ENCODE measurements at regions of chr19 and their contacts with region 1.

Region 1: DNA sequence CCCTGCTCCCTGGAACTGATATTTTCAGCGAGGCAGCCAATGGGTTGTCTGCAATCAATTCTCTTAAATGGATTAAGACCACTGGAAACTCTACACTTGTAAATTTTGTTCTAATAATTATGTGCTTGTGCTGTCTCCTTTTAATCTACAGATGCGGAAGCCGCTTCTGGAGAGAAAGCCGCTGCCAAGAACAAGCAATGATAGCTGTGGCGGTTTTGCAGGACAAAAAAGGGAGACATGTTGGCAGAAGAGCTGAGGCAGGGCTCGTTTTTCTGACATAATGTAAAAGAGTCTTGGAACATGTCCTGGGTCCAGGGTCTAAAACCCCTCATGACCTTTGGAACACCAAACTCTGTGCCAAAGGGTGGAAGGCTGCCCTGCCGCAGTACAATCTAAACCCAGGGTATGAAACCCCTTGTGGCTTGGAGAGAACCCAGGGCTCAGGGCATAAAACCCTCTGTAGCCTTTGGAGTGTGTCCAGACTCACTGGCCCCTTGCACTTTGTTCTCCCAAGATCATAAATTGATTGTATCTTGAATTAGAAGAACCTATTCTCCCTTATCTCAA is 12.7 kb downstream of the ZNF417 start:
- DNase-seq: no peak
- ATAC-seq: peak; percentile 35; the same call in 1 of the 3 replicates
- H3K4me3 ChIP-seq: no peak overlapping the region
- H3K27ac ChIP-seq: no peak overlapping the region
- H3K4me1 ChIP-seq: peaks cover 12% of the 10 kb centered on the region
- H3K27me3 ChIP-seq: no peaks in the 10 kb centered on the region
- CTCF ChIP-seq: no peak
- EP300 ChIP-seq: no peak
- POLR2A ChIP-seq: no peak
- RAD21 ChIP-seq: no peak

Region 2: GRCh38 chr19:57465495-57466395 is 438.0 kb before region 1 on chr19:
- CTCF ChIA-PET with region 1: no interaction called
- POLR2A ChIA-PET with region 1: no interaction called
- in situ Hi-C with region 1: no loop called
- intact Hi-C with region 1: loop called (anchors 5 kb)
- DNase-seq: peak; percentile 57
- ATAC-seq: peak; percentile 96
- H3K4me3 ChIP-seq: no peak overlapping the region
- H3K27ac ChIP-seq: no peak overlapping the region
- H3K4me1 ChIP-seq: no peaks in the 10 kb centered on the region
- H3K27me3 ChIP-seq: no peaks in the 10 kb centered on the region
- CTCF ChIP-seq: peak; percentile 83
- EP300 ChIP-seq: no peak
- POLR2A ChIP-seq: no peak
- RAD21 ChIP-seq: peak; percentile 74

Region 3: GRCh38 chr19:57888560-57889231 is 15.0 kb before region 1 on chr19 and contains the start of gene ZNF814:
- CTCF ChIA-PET with region 1: no interaction called
- POLR2A ChIA-PET with region 1: no interaction called
- in situ Hi-C with region 1: no loop called
- intact Hi-C with region 1: no loop called
- DNase-seq: no peak
- ATAC-seq: peak; percentile 26; the same call in 2 of the 3 replicates
- H3K4me3 ChIP-seq: no peak within 1 kb of the TSS
- H3K27ac ChIP-seq: no peak within 1 kb of the TSS
- H3K4me1 ChIP-seq: no peaks in the 10 kb centered on the region
- H3K27me3 ChIP-seq: no peaks in the 10 kb centered on the region
- CTCF ChIP-seq: peak; percentile 49
- EP300 ChIP-seq: no peak
- POLR2A ChIP-seq: no peak
- RAD21 ChIP-seq: no peak
- total RNA-seq, gene ZNF814: 2.3 and 3.4 TPM in 2 replicates